G401 (cell line): ENCODE measurements at regions of chrX and their contacts with region 1.

Region 1: DNA sequence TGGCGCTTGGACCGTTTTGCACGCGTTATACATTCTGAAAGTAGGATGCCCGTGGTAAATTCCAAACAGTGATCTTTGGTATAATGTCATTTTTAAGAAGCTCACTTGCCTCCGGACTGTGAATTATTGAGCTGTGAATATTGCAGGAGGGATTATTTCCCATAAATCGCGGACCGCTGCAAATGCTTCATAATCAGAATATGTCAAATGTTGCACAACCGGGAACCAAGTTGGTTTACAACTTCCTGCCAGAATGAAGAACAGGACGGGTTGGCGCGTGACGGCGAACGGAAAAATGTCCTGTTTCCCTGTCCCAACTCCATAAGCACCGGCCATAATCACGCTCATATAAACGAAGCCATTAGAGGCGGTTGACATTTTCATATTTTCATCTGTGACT is 67.6 kb downstream of the SHOX start:
- DNase-seq: no peak

Region 2: GRCh38 chrX:650324-650723 is 47.9 kb before region 1 on chrX:
- in situ Hi-C with region 1: loop called (anchors 5 kb)
- DNase-seq: no peak

Region 3: DNA sequence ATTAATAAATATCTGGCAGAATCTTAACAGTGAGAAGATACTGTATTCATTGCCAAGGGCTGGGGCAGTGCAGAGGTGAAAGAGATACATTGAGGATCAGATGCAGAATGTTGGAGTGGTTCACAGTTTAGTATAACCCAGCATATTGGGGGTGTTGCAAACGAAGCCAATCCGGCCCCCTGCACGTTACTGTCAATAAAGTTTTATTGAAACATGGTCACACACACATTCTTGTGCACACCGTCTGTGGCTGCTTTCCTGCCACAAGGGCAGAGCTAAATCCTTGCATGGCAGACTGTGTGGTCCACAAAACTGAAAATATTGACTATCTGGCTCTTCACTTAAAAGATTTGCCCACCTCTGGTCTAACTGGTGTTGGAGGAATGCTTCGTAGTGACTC is 52.1 kb after region 1 on chrX:
- in situ Hi-C with region 1: no loop called
- DNase-seq: no peak